Posterior vena cava (tissue), 2 donors: ENCODE measurements at regions of chr15 and their contacts with region 1.

Region 1: GRCh38 chr15:68635141-68635540 is 56.3 kb downstream of the CORO2B start:
- DNase-seq: peak; percentile 80

Region 2: DNA sequence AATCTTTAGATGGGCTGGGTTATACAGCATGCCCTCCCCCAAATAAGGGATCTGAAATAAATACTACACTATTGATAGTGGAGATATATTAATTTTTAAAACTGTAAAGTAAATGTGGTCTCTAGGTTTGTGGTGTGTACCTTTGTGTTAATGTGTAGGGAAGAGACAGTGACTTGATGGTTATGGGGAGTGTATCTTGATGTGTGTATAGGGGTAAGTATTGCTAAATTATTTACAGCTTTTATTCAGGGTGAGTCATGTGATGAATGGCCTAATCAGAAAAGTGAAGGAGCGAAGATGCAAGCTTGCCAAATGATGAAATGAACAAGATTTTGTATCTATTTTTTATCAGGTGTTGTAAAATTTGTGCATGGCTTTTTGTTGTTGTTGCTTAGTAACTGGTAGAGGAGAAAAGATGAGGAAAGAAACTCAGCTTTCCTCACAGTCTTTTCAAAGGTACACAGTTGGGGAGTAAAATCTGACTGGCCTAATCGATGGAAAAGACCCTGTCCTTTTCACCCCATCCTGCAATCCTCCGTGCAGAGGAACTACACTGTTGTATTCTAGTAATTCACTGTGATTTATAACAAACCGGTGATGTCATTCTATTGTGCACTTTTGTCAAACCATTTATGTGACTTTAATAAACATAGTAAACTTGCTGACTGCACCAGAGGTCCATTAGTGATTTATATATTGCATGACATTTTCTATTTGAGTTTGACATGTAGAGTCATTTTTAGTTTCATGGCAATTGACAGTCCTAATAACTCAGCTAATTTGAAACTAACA is 339.9 kb before region 1 on chr15:
- intact Hi-C with region 1: no loop called
- DNase-seq: no peak

Region 3: DNA sequence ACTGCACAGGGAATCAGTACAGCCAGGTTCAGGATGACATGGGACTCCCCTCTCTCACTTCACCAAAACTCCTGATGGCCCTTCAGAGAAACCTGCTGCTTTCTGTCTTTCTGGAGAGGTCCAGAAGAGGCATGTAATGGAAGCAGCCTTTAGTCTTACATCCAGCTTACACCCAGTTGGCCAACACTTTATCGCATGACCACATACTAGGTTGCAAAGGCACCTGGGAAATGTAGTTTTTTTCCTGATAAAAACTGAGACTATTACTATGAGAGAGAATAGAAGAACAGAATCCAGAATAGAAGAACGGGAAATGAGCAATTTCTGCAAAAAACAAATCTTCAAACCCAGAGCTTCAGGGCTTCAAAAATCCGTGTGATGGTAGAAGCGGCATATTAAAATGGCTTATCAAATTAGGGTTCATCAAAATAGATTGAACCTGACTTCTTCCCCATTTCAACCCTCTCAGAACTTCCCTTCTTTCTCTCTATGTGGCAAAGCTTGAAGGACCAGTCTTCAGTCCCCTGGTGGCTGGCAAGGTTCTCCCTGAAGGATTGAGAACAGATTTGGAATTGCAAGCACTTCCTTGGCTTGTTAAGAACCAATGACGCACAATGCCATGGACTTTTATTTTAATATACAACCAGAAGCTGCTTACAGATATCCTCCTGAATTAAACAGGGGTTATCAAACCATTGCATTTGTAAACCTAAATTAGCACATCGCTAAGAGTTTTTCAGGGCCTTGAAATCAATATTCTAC is 22.0 kb before region 1 on chr15:
- intact Hi-C with region 1: loop called in 1 of 2 experiments (anchors 2 kb)
- DNase-seq: no peak